ENCODE measurements at regions of chr7 and their contacts with region 1.

Region 1: GRCh38 chr7:151123822-151124464 is 37.7 kb downstream of the AGAP3 start:
- DNase-seq: peak; percentile 65
- ATAC-seq: peak; percentile 92
- H3K4me3 ChIP-seq: no peak overlapping the region
- H3K27ac ChIP-seq: no peak overlapping the region
- H3K4me1 ChIP-seq: no peaks in the 10 kb centered on the region
- H3K27me3 ChIP-seq: no peaks in the 10 kb centered on the region
- CTCF ChIP-seq: peak; percentile 98
- EP300 ChIP-seq: no peak
- POLR2A ChIP-seq: no peak
- RAD21 ChIP-seq: peak; percentile 84

Region 2: DNA sequence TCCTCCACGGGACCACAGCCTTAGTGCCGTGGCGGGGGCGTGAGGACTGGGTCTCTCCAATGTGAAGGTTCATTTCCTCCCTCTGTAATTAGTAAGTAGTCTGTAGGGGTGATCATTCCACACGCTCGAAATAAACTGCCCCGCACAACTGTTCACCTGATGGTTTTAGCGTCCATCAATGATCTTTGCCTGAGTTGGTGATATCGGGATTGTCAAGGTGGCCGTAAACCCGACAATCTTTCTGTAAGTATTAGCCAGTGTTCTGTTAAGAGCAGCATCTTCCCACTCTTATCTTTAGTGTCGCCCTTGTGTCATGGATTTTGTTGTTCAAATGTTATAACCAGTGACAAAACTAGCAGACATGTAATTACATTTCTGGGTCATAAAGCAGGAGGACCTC is 20.0 kb before region 1 on chr7:
- CTCF ChIA-PET with region 1: no interaction called
- POLR2A ChIA-PET with region 1: interaction called, 3 read pairs
- in situ Hi-C with region 1: no loop called
- intact Hi-C with region 1: loop called (anchors 1 kb)
- DNase-seq: no peak
- ATAC-seq: no peak
- H3K4me3 ChIP-seq: no peak overlapping the region
- H3K27ac ChIP-seq: no peak overlapping the region
- H3K4me1 ChIP-seq: peaks cover 11% of the 10 kb centered on the region
- H3K27me3 ChIP-seq: no peaks in the 10 kb centered on the region
- CTCF ChIP-seq: no peak
- EP300 ChIP-seq: no peak
- POLR2A ChIP-seq: no peak
- RAD21 ChIP-seq: no peak

Region 3: GRCh38 chr7:151172273-151173141 is 48.6 kb after region 1 on chr7:
- CTCF ChIA-PET with region 1: interaction called, 67 read pairs
- POLR2A ChIA-PET with region 1: no interaction called
- in situ Hi-C with region 1: no loop called
- intact Hi-C with region 1: no loop called
- DNase-seq: peak; percentile 53
- ATAC-seq: peak; percentile 69
- H3K4me3 ChIP-seq: no peak overlapping the region
- H3K27ac ChIP-seq: no peak overlapping the region
- H3K4me1 ChIP-seq: no peaks in the 10 kb centered on the region
- H3K27me3 ChIP-seq: peaks cover 2 to 45% of the 10 kb centered on the region in 2 experiments; a peak in 4 of 5 replicates
- CTCF ChIP-seq: peak; percentile 100
- EP300 ChIP-seq: no peak
- POLR2A ChIP-seq: no peak
- RAD21 ChIP-seq: peak; percentile 95

Region 4: GRCh38 chr7:151410405-151411390 is 286.8 kb after region 1 on chr7:
- CTCF ChIA-PET with region 1: no interaction called
- POLR2A ChIA-PET with region 1: no interaction called
- in situ Hi-C with region 1: no loop called
- intact Hi-C with region 1: no loop called
- DNase-seq: no peak
- ATAC-seq: peak; percentile 26
- H3K4me3 ChIP-seq: peak overlapping the region; percentile 45 to 76 (median 65); a peak in 5 of 6 replicates
- H3K27ac ChIP-seq: no peak overlapping the region
- H3K4me1 ChIP-seq: peaks cover 57% of the 10 kb centered on the region
- H3K27me3 ChIP-seq: peaks cover 2 to 56% of the 10 kb centered on the region in 2 experiments
- CTCF ChIP-seq: no peak
- EP300 ChIP-seq: no peak
- POLR2A ChIP-seq: no peak
- RAD21 ChIP-seq: no peak

Measured in HepG2 (cell line).